Panc1 (cell line): ENCODE measurements at regions of chr2 and their contacts with region 1.

Region 1: DNA sequence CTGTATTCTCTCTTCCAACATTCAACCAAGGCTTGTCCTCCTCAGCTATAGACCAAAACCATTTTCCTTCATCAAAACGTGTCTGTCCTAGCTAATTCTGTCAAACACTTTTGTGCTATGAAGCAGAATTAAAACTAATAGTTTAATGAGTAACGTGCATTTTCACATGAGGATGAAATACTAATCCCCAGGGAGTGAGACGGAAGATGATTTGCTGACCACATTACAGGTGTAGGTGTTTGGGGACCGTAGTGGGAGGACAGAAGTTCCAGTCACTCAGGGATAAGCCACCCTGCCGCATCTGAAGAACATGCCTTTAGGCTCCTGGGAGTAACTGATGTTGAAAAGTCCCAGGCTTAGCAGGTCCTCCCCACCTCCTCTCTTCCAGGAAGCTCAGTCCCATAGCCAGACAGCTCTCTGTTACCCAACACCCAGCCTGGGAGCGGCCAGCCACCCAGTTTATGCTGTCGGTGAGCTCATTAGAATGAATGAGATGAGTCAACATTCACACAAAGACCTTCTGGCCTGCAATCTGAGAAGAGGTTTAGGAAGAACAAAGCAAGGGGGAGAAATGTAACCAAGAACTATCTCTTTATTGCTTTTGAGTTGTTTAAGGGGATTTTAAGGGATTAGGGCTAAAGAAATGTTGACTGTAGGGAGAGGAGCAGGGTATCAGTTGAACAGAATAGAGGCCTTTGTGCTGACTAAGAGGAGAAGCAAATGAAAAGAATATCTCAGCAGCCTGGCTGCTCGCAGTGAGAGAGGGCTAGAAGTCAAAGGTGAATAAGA is 122.5 kb downstream of the FOXI3 start:
- DNase-seq: no peak
- ATAC-seq: no peak
- H3K4me3 ChIP-seq: no peak overlapping the region
- H3K27ac ChIP-seq: no peak overlapping the region
- H3K4me1 ChIP-seq: no peaks in the 10 kb centered on the region
- H3K27me3 ChIP-seq: peaks cover 6% of the 10 kb centered on the region
- CTCF ChIP-seq: no peak

Region 2: GRCh38 chr2:88074854-88075292 is 255.1 kb before region 1 on chr2:
- CTCF ChIA-PET with region 1: no interaction called
- POLR2A ChIA-PET with region 1: no interaction called
- in situ Hi-C with region 1: no loop called
- intact Hi-C with region 1: loop called (anchors 10 kb)
- DNase-seq: no peak
- ATAC-seq: no peak
- H3K4me3 ChIP-seq: no peak overlapping the region
- H3K27ac ChIP-seq: no peak overlapping the region
- H3K4me1 ChIP-seq: no peaks in the 10 kb centered on the region
- H3K27me3 ChIP-seq: no peaks in the 10 kb centered on the region
- CTCF ChIP-seq: no peak

Region 3: GRCh38 chr2:88230911-88231310 is 99.1 kb before region 1 on chr2:
- CTCF ChIA-PET with region 1: no interaction called
- POLR2A ChIA-PET with region 1: no interaction called
- in situ Hi-C with region 1: no loop called
- intact Hi-C with region 1: no loop called
- DNase-seq: no peak
- ATAC-seq: no peak
- H3K4me3 ChIP-seq: no peak overlapping the region
- H3K27ac ChIP-seq: no peak overlapping the region
- H3K4me1 ChIP-seq: no peaks in the 10 kb centered on the region
- H3K27me3 ChIP-seq: no peaks in the 10 kb centered on the region
- CTCF ChIP-seq: no peak

Region 4: GRCh38 chr2:88350331-88351248 is 20.6 kb after region 1 on chr2:
- CTCF ChIA-PET with region 1: no interaction called
- POLR2A ChIA-PET with region 1: no interaction called
- in situ Hi-C with region 1: no loop called
- intact Hi-C with region 1: no loop called
- DNase-seq: peak; percentile 33
- ATAC-seq: peak; percentile 89
- H3K4me3 ChIP-seq: peak overlapping the region; percentile 19 to 44
- H3K27ac ChIP-seq: no peak overlapping the region
- H3K4me1 ChIP-seq: peaks cover 4% of the 10 kb centered on the region; the same call in 1 of the 2 replicates
- H3K27me3 ChIP-seq: peaks cover 2% of the 10 kb centered on the region
- CTCF ChIP-seq: peak; percentile 93

Region 5: DNA sequence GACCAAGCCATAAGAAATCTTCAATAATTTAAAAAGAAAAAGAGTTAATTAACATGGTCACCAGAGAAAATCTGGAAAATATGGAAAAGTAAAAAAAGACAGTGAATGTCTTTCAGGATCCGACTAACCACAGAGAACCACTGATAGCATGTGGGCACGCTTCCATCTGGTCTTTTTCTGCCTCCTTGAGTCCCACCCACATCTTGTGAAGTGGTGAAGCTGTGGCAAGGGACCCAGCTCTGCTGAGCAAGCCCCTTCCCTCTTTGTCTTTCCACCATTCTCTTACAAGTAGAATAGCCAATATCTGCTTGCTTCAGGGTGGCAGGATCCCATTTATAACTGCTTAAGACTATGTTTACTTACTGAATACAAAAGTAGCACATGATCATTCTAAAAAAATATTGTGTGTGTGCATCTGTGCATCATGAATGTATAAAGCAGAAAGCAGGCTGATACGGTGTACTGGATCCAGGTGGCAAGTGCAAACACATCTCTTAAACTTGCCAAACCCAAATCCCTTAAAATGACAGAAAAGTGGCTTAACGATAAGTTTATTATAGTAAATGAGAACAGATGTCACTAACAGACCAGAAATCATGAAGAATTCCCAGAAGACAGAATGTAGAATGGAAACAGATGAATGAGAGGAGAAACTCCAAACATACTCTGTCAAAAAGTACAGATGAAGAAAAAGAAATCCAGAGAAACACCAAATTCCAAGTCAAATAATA is 70.2 kb after region 1 on chr2:
- CTCF ChIA-PET with region 1: no interaction called
- POLR2A ChIA-PET with region 1: no interaction called
- in situ Hi-C with region 1: no loop called
- intact Hi-C with region 1: no loop called
- DNase-seq: no peak
- ATAC-seq: no peak
- H3K4me3 ChIP-seq: no peak overlapping the region
- H3K27ac ChIP-seq: no peak overlapping the region
- H3K4me1 ChIP-seq: no peaks in the 10 kb centered on the region
- H3K27me3 ChIP-seq: peaks cover 8% of the 10 kb centered on the region; the same call in 1 of the 2 replicates
- CTCF ChIP-seq: no peak

Region 6: DNA sequence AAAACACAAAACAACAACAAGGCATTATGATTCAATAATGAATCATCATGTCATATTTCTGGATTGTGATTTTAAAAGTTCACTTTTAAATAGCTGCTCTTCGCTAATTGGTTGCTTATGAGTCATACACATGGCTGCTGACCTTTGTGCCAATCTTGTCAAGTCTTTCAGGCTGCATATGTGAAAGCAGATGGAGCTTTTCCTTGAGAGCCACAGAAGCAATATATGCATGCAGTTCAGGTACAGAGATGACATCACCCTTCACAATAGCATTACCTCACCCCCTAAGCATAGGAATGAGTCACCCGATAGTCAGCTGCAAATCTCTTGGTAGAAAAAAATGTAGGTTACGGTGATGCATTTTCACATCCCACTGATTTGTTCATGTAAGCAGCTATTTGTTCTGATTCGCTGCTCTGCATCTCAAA is 270.0 kb after region 1 on chr2:
- CTCF ChIA-PET with region 1: no interaction called
- POLR2A ChIA-PET with region 1: no interaction called
- in situ Hi-C with region 1: no loop called
- intact Hi-C with region 1: no loop called
- DNase-seq: peak; percentile 99
- ATAC-seq: peak; percentile 98
- H3K4me3 ChIP-seq: no peak overlapping the region
- H3K27ac ChIP-seq: no peak overlapping the region
- H3K4me1 ChIP-seq: peaks cover 10% of the 10 kb centered on the region
- H3K27me3 ChIP-seq: no peaks in the 10 kb centered on the region
- CTCF ChIP-seq: no peak